HCT116 (cell line): ENCODE measurements at regions of chr12 and their contacts with region 1.

Region 1: GRCh38 chr12:9750276-9751203 is 10.2 kb downstream of the CD69 start:
- DNase-seq: peak; percentile 46
- ATAC-seq: peak; percentile 87
- H3K4me3 ChIP-seq: no peak overlapping the region
- H3K27ac ChIP-seq: no peak overlapping the region
- H3K4me1 ChIP-seq: peaks cover 0 to 3% of the 10 kb centered on the region in 2 experiments; a peak in 2 of 4 replicates
- H3K27me3 ChIP-seq: peaks cover 23% of the 10 kb centered on the region
- CTCF ChIP-seq: peak; percentile 70 to 78 (median 72); a peak in 5 of 6 replicates
- POLR2A ChIP-seq: no peak
- RAD21 ChIP-seq: peak; percentile 64

Region 2: GRCh38 chr12:9347328-9348127 is 403.0 kb before region 1 on chr12:
- CTCF ChIA-PET with region 1: no interaction called
- POLR2A ChIA-PET with region 1: no interaction called
- RAD21 ChIA-PET with region 1: no interaction called
- intact Hi-C with region 1: no loop called
- DNase-seq: peak; percentile 10
- ATAC-seq: no peak
- H3K4me3 ChIP-seq: no peak overlapping the region
- H3K27ac ChIP-seq: no peak overlapping the region
- H3K4me1 ChIP-seq: peaks cover 0 to 5% of the 10 kb centered on the region in 2 experiments; a peak in 1 of 4 replicates
- H3K27me3 ChIP-seq: no peaks in the 10 kb centered on the region
- CTCF ChIP-seq: no peak
- POLR2A ChIP-seq: no peak
- RAD21 ChIP-seq: no peak

Region 3: GRCh38 chr12:9717070-9717925 is 33.2 kb before region 1 on chr12:
- CTCF ChIA-PET with region 1: no interaction called
- POLR2A ChIA-PET with region 1: no interaction called
- RAD21 ChIA-PET with region 1: no interaction called
- intact Hi-C with region 1: no loop called
- DNase-seq: no peak
- ATAC-seq: no peak
- H3K4me3 ChIP-seq: no peak overlapping the region
- H3K27ac ChIP-seq: no peak overlapping the region
- H3K4me1 ChIP-seq: no peaks in the 10 kb centered on the region
- H3K27me3 ChIP-seq: peaks cover 24% of the 10 kb centered on the region
- CTCF ChIP-seq: no peak
- POLR2A ChIP-seq: no peak
- RAD21 ChIP-seq: no peak

Region 4: DNA sequence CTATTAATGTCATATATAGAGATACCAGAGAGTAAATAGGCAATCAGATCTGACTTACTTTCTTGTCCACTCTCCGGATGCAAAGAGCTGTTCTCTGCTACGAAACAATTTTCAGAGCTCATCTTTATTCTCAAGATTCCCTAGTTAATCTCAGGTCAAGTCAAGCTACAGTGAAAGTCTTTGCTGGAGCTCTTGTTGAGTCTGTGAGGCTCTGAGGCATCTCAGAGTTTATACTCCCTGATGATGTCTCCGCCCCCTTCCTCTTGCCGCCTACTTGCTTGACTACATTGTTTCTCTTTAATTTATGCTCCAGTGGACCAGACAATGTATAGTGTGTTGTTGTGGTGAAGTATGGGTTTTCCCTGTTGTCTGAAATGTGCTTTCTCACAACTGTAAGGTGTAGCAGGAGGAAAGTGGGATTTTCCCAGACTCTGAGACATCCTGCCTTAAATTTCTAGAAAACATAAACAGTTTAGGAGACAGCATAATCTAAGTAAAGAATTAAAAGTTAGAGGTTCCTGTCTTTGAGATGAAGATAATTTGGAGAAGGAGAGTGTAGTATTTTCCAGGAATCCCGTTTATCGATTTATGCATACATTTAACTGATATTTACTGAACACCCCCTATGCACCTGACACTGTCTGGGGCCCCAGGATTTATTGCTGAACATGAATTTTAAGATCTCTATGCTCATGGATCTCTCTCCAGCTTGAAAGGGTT is 10.3 kb after region 1 on chr12 and contains the start of gene CD69:
- CTCF ChIA-PET with region 1: interaction called, 21 read pairs
- POLR2A ChIA-PET with region 1: no interaction called
- RAD21 ChIA-PET with region 1: no interaction called
- intact Hi-C with region 1: no loop called
- DNase-seq: no peak
- ATAC-seq: no peak
- H3K4me3 ChIP-seq: no peak within 1 kb of the TSS
- H3K27ac ChIP-seq: no peak within 1 kb of the TSS
- H3K4me1 ChIP-seq: no peaks in the 10 kb centered on the region
- H3K27me3 ChIP-seq: peaks cover 68% of the 10 kb centered on the region
- CTCF ChIP-seq: no peak
- POLR2A ChIP-seq: no peak
- RAD21 ChIP-seq: no peak
- total RNA-seq, gene CD69: not detected

Region 5: GRCh38 chr12:9797722-9798619 is 47.4 kb after region 1 on chr12:
- CTCF ChIA-PET with region 1: interaction called, 68 read pairs
- POLR2A ChIA-PET with region 1: no interaction called
- RAD21 ChIA-PET with region 1: interaction called in 1 of 2 experiments, 4 read pairs
- intact Hi-C with region 1: loop called (anchors 1 kb)
- DNase-seq: peak; percentile 71
- ATAC-seq: peak; percentile 93
- H3K4me3 ChIP-seq: no peak overlapping the region
- H3K27ac ChIP-seq: no peak overlapping the region
- H3K4me1 ChIP-seq: no peaks in the 10 kb centered on the region
- H3K27me3 ChIP-seq: peaks cover 36% of the 10 kb centered on the region
- CTCF ChIP-seq: peak; percentile 50 to 57 (median 53)
- POLR2A ChIP-seq: no peak
- RAD21 ChIP-seq: peak; percentile 77

Region 6: DNA sequence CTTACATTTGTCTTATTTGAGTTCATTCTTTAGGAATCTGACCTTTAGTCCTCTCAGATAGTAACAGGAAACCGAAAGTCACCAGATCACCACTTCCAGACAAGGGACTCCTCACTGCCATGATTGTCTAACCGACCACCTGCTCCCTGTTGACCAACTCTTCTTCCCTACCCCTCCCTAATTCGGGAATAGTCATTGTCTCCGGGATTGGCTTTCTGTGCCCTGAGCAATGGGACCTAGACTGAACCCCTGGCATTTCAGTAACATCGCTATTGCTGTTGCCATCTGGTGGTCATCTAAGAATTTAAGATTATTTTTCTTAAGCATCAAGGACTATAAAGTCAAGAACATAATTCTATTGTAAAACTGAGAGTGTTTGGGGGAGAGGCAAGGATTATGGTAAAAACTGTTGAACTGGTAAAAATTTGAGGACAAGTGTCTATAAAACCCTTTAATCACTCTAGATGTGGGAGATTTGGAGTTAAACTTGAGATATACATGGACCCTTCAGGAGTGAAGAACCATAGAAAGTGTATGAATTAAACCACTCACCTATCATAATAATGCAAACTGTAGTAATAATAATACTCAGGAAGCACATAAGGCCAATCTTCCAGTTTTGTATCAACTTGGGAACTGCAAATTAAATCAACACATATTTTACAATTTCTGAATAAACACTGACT is 175.3 kb after region 1 on chr12:
- CTCF ChIA-PET with region 1: interaction called, 12 read pairs
- POLR2A ChIA-PET with region 1: no interaction called
- RAD21 ChIA-PET with region 1: no interaction called
- intact Hi-C with region 1: loop called (anchors 1 kb)
- DNase-seq: peak; percentile 24
- ATAC-seq: peak; percentile 73
- H3K4me3 ChIP-seq: no peak overlapping the region
- H3K27ac ChIP-seq: no peak overlapping the region
- H3K4me1 ChIP-seq: no peaks in the 10 kb centered on the region
- H3K27me3 ChIP-seq: peaks cover 30% of the 10 kb centered on the region
- CTCF ChIP-seq: peak; percentile 43 to 50 (median 47); a peak in 5 of 6 replicates
- POLR2A ChIP-seq: no peak
- RAD21 ChIP-seq: peak; percentile 47

Region 7: DNA sequence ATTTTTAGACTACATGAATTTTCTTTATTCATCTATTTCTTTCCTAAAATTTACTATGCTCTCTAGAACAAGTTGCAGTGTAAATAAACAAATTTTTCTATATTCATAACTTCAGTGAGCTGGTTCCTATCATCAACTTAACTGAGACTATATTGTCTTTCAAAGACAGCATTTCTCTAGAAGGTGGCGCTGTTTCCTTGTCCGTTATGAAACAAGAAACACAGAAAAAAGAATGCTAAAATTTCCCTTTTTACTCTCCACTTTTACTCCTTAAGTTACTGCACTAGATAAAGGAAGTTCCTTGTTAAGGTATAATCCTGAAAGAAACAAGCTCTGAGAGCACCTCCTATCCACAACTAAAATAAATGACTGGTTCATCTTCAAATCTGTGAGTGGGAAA is 189.8 kb after region 1 on chr12:
- CTCF ChIA-PET with region 1: interaction called, 11 read pairs
- POLR2A ChIA-PET with region 1: no interaction called
- RAD21 ChIA-PET with region 1: no interaction called
- intact Hi-C with region 1: no loop called
- DNase-seq: no peak
- ATAC-seq: 0 out of 2 replicates have a peak, but pooled peaks have one; percentile 38
- H3K4me3 ChIP-seq: no peak overlapping the region
- H3K27ac ChIP-seq: no peak overlapping the region
- H3K4me1 ChIP-seq: no peaks in the 10 kb centered on the region
- H3K27me3 ChIP-seq: peaks cover 52% of the 10 kb centered on the region
- CTCF ChIP-seq: peak; percentile 14 to 54 (median 36); a peak in 3 of 6 replicates
- POLR2A ChIP-seq: no peak
- RAD21 ChIP-seq: peak; percentile 30; the same call in 1 of the 2 replicates